Esophagus squamous epithelium (tissue), 5 donors: ENCODE measurements at regions of chr3 and their contacts with region 1.

Region 1: GRCh38 chr3:141192345-141192744 is 39.3 kb upstream of the PXYLP1 start:
- DNase-seq: peak; percentile 81
- H3K4me3 ChIP-seq: no peak overlapping the region
- H3K27ac ChIP-seq: no peak overlapping the region
- H3K4me1 ChIP-seq: peaks cover 0 to 7% (median 0%) of the 10 kb centered on the region in 3 donors
- H3K27me3 ChIP-seq: peaks cover 0 to 57% (median 0%) of the 10 kb centered on the region in 4 donors
- CTCF ChIP-seq: peak; percentile 92 to 99 (median 98)
- POLR2A ChIP-seq: no peak

Region 2: DNA sequence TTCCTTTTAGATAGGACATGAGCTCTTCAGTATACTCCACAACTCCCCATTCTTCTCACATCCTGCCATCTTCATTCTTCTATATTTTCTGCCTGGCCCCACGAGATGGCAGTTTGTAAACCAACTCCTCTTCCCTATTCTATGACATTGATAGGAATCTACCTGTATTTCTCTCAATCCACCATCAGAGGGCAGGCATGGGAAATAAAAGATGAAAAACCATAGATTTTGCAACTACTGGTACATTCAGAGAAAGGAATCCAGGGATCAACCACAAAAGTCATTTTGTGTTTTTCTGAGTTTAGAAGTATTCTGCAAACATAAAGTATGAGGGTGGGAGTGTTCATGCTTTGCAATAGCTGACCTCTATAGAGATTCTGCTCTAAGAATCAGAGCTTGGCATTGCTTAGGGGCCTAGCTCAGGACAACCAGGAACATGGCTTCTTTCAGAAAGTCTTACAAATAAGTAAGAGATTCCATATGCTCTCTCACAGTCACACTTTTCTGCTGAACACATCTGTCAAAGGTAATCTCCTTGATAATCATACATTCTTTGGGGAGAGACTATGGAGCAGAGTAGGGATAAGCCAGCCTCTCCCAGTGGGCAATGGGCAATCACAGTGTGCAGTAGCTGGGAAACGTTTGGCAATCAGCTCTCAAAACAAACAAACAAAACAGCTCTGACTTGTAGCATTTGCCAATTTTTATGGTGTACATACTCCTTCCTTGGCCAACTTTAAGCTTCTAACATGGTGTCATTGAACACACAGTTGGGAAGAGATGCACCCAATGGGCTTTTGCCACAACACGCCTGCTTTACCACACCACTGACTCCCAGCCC is 293.8 kb before region 1 on chr3:
- intact Hi-C with region 1: loop called (anchors 10 kb)
- DNase-seq: no peak
- H3K4me3 ChIP-seq: no peak overlapping the region
- H3K27ac ChIP-seq: no peak overlapping the region
- H3K4me1 ChIP-seq: no peaks in the 10 kb centered on the region
- H3K27me3 ChIP-seq: peaks cover 0 to 18% (median 0%) of the 10 kb centered on the region in 4 donors
- CTCF ChIP-seq: peak in 5 of 6 experiments; percentile 44 to 67 (median 50)
- POLR2A ChIP-seq: no peak

Region 3: DNA sequence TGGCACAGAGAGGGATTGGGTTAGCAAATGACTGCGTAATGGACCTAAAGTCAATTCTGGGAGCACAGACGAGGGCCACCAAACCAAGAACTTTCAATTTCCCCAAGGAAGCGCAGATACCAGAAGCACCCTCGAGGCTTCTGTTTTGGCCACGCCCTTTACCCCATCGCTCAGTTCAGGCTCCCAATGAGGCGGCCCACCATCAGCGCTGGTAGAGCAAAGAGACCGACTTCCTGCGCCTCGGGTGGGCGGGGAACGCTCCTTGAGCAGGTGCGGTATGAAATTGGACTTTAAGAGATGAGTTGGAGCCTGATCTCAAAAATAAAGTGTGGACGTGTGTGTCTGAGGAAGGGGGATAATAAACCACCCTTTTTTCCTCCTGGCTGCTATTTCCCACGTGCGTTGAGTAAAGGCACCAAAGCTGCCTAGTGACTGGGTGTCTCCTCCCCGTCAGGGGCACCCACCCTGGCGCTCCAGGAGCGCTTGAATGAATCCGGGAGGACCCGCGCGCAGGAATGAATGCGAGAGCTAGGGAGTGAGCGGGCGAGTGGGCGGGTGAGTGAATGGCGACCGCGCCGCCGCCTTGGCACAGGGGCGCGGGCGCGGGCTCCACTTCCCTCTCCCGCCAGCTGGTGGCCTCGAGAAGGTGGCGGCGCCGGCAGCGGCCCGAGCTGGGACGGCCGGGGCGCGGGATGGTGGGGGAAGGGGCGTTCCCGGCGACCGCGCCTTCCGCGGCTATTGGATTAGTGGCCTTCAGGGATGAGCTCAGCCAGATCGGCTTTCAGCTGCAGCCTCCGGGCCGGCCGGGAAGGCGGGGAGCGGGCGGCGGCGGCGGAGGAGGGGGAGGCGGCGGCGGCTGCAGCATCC is 141.5 kb before region 1 on chr3 and contains the start of gene SPSB4:
- intact Hi-C with region 1: no loop called
- DNase-seq: no peak
- H3K4me3 ChIP-seq: peak within 1 kb of the TSS; percentile 23 to 65 (median 42)
- H3K27ac ChIP-seq: no peak within 1 kb of the TSS
- H3K4me1 ChIP-seq: peaks cover 13 to 27% (median 18%) of the 10 kb centered on the region in 3 donors
- H3K27me3 ChIP-seq: peaks cover 12 to 92% (median 16%) of the 10 kb centered on the region in 4 donors
- CTCF ChIP-seq: peak in 3 of 6 experiments; percentile 13 to 28 (median 27)
- POLR2A ChIP-seq: no peak
- total RNA-seq, gene SPSB4: not detected

Region 4: DNA sequence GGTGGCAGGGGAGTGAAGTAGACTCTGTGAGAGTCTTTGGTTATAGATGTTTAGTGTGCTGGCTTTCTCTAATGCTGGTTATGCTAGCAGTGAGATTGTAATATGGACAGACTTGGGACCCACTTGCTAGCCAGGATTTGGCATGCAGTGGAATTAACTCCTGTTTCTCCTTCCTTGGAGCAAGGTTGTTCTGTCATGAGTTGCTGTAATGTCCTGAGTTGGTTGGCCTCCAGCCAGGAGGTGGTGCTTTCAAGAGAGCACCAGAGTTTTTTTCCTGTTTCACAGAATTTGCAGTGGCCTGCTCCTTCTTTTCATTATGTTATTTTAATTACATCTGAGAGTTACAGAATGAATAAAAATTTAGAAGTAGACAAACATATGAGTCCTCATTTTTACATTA is 48.8 kb before region 1 on chr3:
- intact Hi-C with region 1: no loop called
- DNase-seq: no peak
- H3K4me3 ChIP-seq: no peak overlapping the region
- H3K27ac ChIP-seq: no peak overlapping the region
- H3K4me1 ChIP-seq: no peaks in the 10 kb centered on the region
- H3K27me3 ChIP-seq: no peaks in the 10 kb centered on the region
- CTCF ChIP-seq: no peak
- POLR2A ChIP-seq: no peak